CD8-positive, alpha-beta T cell (primary cell): ENCODE measurements at regions of chr18 and their contacts with region 1.

Region 1: DNA sequence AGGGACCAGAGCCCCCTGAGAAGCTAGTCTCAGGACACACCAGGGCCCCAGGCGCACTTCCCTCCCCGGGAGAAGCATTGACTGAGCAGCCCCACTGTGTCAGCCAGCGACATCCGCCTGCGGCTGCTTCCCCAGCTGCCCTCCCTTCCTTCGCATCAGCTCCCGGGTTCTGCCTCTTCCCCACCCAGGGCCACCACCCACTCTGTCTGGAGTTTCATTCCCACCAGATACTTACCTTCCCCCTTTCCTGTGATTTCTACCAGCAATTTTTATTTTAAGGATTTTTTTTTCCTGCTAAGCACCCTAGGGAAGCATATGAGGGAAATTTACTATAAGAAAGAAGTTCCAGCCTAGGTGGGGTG is 99.2 kb downstream of the SMAD7 start:
- DNase-seq: peak in 3 of 9 experiments; percentile 18 to 41 (median 39)
- ATAC-seq: peak; percentile 57
- H3K4me3 ChIP-seq: no peak overlapping the region
- H3K4me3 Mint-ChIP-seq: no peak overlapping the region
- H3K27ac ChIP-seq: no peak overlapping the region
- H3K27ac Mint-ChIP-seq: no peak overlapping the region
- H3K4me1 ChIP-seq: peaks cover 12% of the 10 kb centered on the region
- H3K4me1 Mint-ChIP-seq: peaks cover 34% of the 10 kb centered on the region
- H3K27me3 ChIP-seq: no peaks in the 10 kb centered on the region
- H3K27me3 Mint-ChIP-seq: no peaks in the 10 kb centered on the region
- CTCF ChIP-seq: no peak

Region 2: GRCh38 chr18:48896690-48897511 is 45.3 kb after region 1 on chr18:
- CTCF ChIA-PET with region 1: interaction called, 4 read pairs
- POLR2A ChIA-PET with region 1: no interaction called
- intact Hi-C with region 1: loop called in 1 of 2 experiments (anchors 5 kb)
- DNase-seq: peak in 1 of 9 experiments; percentile 49
- ATAC-seq: no peak
- H3K4me3 ChIP-seq: no peak overlapping the region
- H3K4me3 Mint-ChIP-seq: no peak overlapping the region
- H3K27ac ChIP-seq: no peak overlapping the region
- H3K27ac Mint-ChIP-seq: no peak overlapping the region
- H3K4me1 ChIP-seq: peaks cover 6% of the 10 kb centered on the region
- H3K4me1 Mint-ChIP-seq: peaks cover 12% of the 10 kb centered on the region
- H3K27me3 ChIP-seq: no peaks in the 10 kb centered on the region
- H3K27me3 Mint-ChIP-seq: no peaks in the 10 kb centered on the region
- CTCF ChIP-seq: no peak